Activated CD4-positive, alpha-beta memory T cell treated with anti-CD3 and anti-CD28 coated beads for 36 hours (primary cell): ENCODE measurements at regions of chr5 and their contacts with region 1.

Region 1: GRCh38 chr5:142507531-142508372 is 178.1 kb downstream of the FGF1 start:
- DNase-seq: peak; percentile 65
- H3K4me3 Mint-ChIP-seq: no peak overlapping the region
- H3K27ac Mint-ChIP-seq: peak overlapping the region; percentile 46
- H3K4me1 Mint-ChIP-seq: peaks cover 57% of the 10 kb centered on the region
- H3K27me3 Mint-ChIP-seq: no peaks in the 10 kb centered on the region

Region 2: DNA sequence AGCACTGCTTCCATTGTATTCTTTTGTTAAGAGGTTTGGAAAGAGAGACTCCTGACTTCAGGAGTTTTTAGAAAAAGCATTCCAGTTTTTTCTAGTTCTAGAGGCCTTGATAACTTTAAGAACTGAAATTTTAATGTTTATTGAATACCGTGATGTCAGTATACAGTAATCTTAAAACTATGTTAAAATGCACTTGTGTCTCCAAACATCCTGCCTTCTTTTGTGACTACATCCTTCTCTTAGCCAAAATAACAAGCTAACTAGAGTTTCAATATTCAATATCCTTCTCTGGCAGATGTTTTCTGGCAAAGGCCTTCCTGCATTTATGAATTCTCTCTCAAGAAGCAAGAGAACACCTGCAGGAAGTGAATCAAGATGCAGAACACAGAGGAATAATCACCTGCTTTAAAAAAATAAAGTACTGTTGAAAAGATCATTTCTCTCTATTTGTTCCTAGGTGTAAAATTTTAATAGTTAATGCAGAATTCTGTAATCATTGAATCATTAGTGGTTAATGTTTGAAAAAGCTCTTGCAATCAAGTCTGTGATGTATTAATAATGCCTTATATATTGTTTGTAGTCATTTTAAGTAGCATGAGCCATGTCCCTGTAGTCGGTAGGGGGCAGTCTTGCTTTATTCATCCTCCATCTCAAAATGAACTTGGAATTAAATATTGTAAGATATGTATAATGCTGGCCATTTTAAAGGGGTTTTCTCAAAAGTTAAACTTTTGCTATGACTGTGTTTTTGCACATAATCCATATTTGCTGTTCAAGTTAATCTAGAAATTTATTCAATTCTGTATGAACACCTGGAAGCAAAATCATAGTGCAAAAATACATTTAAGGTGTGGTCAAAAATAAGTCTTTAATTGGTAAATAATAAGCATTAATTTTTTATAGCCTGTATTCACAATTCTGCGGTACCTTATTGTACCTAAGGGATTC is 356.0 kb before region 1 on chr5:
- CTCF ChIA-PET with region 1: no interaction called
- POLR2A ChIA-PET with region 1: no interaction called
- intact Hi-C with region 1: loop called (anchors 1 kb)
- DNase-seq: peak; percentile 56
- H3K4me3 Mint-ChIP-seq: no peak overlapping the region
- H3K27ac Mint-ChIP-seq: no peak overlapping the region
- H3K4me1 Mint-ChIP-seq: peaks cover 7% of the 10 kb centered on the region
- H3K27me3 Mint-ChIP-seq: no peaks in the 10 kb centered on the region

Region 3: DNA sequence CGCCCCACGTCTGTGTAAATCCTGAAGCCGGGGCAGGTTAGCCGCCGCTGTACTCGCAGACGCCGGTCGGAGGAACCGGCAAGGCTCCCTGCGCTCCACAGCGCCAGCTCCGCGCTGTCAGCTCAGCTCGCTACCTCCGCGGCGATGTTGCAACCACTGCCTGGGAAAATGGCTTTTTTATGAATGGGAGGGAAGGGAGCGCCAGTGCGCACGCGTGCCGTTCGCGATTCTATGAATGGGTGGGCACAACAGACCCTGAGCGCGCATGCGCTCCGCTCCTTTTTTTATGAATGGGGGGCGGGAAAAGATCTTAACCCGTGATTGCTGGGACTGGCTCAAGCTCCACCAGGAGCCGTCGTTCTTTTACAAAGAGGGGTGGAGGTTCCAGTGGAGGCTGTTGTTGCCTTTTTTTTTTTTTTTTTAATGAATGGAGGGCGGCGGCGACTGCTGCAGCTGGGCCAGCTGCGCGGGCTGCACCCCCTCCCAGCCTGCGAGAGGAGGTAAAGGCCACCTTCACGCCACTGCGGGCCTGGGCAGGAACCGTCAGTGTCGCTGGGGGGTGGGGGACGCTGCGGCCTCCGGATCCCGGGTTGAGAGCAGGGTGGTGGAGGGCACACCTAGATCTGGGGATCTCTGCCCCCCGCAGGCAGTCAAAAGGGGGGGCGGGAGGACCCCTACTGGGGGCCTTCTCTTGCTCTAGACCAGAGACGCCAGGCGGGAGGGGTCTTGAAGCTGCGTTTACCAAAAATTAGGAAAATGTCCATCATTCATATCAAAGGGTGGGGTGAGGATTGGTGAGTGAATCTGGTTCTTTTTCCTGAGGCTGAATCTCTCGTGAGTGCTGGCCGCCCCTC is 182.7 kb before region 1 on chr5 and contains the start of gene SPRY4:
- CTCF ChIA-PET with region 1: no interaction called
- POLR2A ChIA-PET with region 1: no interaction called
- intact Hi-C with region 1: loop called (anchors 5 kb)
- DNase-seq: peak; percentile 94
- H3K4me3 Mint-ChIP-seq: peak within 1 kb of the TSS; percentile 78
- H3K27ac Mint-ChIP-seq: no peak within 1 kb of the TSS
- H3K4me1 Mint-ChIP-seq: peaks cover 26% of the 10 kb centered on the region
- H3K27me3 Mint-ChIP-seq: peaks cover 48% of the 10 kb centered on the region
- total RNA-seq, gene SPRY4: 1.1 to 1.2 TPM

Region 4: GRCh38 chr5:142356716-142357473 is 150.9 kb before region 1 on chr5:
- CTCF ChIA-PET with region 1: interaction called, 4 read pairs
- POLR2A ChIA-PET with region 1: interaction called, 4 read pairs
- intact Hi-C with region 1: loop called (anchors 2 kb)
- DNase-seq: peak; percentile 95
- H3K4me3 Mint-ChIP-seq: peak overlapping the region; percentile 71
- H3K27ac Mint-ChIP-seq: peak overlapping the region; percentile 91
- H3K4me1 Mint-ChIP-seq: peaks cover 38% of the 10 kb centered on the region
- H3K27me3 Mint-ChIP-seq: no peaks in the 10 kb centered on the region

Region 5: GRCh38 chr5:142472300-142472951 is 35.3 kb before region 1 on chr5:
- CTCF ChIA-PET with region 1: interaction called, 3 read pairs
- POLR2A ChIA-PET with region 1: no interaction called
- intact Hi-C with region 1: loop called (anchors 1 kb)
- DNase-seq: peak; percentile 84
- H3K4me3 Mint-ChIP-seq: peak overlapping the region; percentile 27
- H3K27ac Mint-ChIP-seq: peak overlapping the region; percentile 85
- H3K4me1 Mint-ChIP-seq: peaks cover 22% of the 10 kb centered on the region
- H3K27me3 Mint-ChIP-seq: no peaks in the 10 kb centered on the region